K562 (cell line): ENCODE measurements at regions of chr12 and their contacts with region 1.

Region 1: DNA sequence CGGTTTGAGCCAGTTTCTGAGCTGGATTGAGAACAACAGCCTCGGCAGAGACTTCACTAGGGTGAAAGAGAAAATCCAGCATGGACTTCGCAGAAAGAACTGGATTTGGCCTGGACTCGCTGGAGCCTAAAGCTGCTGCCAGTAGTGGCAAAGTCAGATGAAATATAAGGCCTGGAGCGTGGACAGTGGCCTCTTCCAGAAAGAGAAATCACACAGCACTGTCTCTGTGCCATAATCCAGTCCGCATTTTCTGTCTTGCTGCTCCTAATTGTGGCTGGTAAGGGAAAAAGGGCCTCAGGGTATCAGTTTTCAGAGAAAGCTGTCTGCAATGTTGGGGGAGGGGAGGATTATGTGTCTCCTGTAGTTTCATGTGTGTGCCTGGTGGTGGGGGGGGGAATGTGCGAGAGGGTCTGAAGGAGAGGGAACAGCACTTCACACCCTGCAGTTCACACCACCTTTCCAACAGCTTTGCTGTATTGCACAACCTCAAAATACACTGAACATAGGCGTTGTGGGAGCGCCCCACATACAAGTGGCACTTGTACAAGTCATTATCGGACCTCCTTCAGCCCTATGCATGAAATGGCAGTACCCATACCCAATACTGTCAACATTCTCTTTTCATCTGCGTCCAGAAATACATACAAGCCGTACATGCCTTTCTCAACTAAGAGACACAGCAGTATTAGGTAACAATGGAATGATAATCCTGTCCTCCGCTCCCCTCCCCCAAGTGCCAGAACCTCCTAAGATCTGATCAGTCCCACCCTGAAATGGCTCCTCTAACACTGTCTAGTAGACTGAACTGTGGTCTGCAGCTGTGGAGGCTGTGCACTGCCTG is 107.5 kb upstream of the ATF7IP start:
- DNase-seq: peak; percentile 17 to 95 (median 71)
- ATAC-seq: peak; percentile 88
- H3K4me3 ChIP-seq: no peak overlapping the region
- H3K27ac ChIP-seq: peak overlapping the region; percentile 98
- H3K4me1 ChIP-seq: peaks cover 19 to 37% of the 10 kb centered on the region in 2 experiments
- H3K27me3 ChIP-seq: no peaks in the 10 kb centered on the region
- CTCF ChIP-seq: peak in 1 of 3 experiments; percentile 13; a peak in 2 of 6 replicates
- EP300 ChIP-seq: peak; percentile 86
- POLR2A ChIP-seq: peak; percentile 29; the same call in 1 of the 2 replicates
- RAD21 ChIP-seq: peak; percentile 62 to 71

Region 2: GRCh38 chr12:14043811-14044530 is 214.0 kb before region 1 on chr12:
- CTCF ChIA-PET with region 1: no interaction called
- POLR2A ChIA-PET with region 1: no interaction called
- in situ Hi-C with region 1: no loop called
- intact Hi-C with region 1: no loop called
- DNase-seq: no peak
- ATAC-seq: no peak
- H3K4me3 ChIP-seq: no peak overlapping the region
- H3K27ac ChIP-seq: no peak overlapping the region
- H3K4me1 ChIP-seq: no peaks in the 10 kb centered on the region
- H3K27me3 ChIP-seq: no peaks in the 10 kb centered on the region
- CTCF ChIP-seq: no peak
- EP300 ChIP-seq: no peak
- POLR2A ChIP-seq: no peak
- RAD21 ChIP-seq: no peak

Region 3: GRCh38 chr12:14138495-14138894 is 119.5 kb before region 1 on chr12:
- CTCF ChIA-PET with region 1: no interaction called
- POLR2A ChIA-PET with region 1: no interaction called
- in situ Hi-C with region 1: no loop called
- intact Hi-C with region 1: no loop called
- DNase-seq: peak; percentile 1 to 9 (median 7)
- ATAC-seq: peak; percentile 81
- H3K4me3 ChIP-seq: no peak overlapping the region
- H3K27ac ChIP-seq: no peak overlapping the region
- H3K4me1 ChIP-seq: no peaks in the 10 kb centered on the region
- H3K27me3 ChIP-seq: no peaks in the 10 kb centered on the region
- CTCF ChIP-seq: 0 out of 6 replicates have a peak, but pooled peaks have one; percentile 15 to 21 (median 19)
- EP300 ChIP-seq: no peak
- POLR2A ChIP-seq: no peak
- RAD21 ChIP-seq: no peak

Region 4: GRCh38 chr12:14273908-14274298 is 15.9 kb after region 1 on chr12:
- CTCF ChIA-PET with region 1: no interaction called
- POLR2A ChIA-PET with region 1: no interaction called
- in situ Hi-C with region 1: no loop called
- intact Hi-C with region 1: no loop called
- DNase-seq: no peak
- ATAC-seq: no peak; the same call in 1 of the 3 replicates
- H3K4me3 ChIP-seq: no peak overlapping the region
- H3K27ac ChIP-seq: no peak overlapping the region; the same call in 2 of the 3 replicates
- H3K4me1 ChIP-seq: peaks cover 0 to 3% of the 10 kb centered on the region in 2 experiments; a peak in 2 of 5 replicates
- H3K27me3 ChIP-seq: no peaks in the 10 kb centered on the region
- CTCF ChIP-seq: no peak
- EP300 ChIP-seq: no peak
- POLR2A ChIP-seq: no peak
- RAD21 ChIP-seq: no peak

Region 5: GRCh38 chr12:14284184-14284722 is 26.3 kb after region 1 on chr12:
- CTCF ChIA-PET with region 1: no interaction called
- POLR2A ChIA-PET with region 1: interaction called, 7 read pairs
- in situ Hi-C with region 1: no loop called
- intact Hi-C with region 1: loop called (anchors 1 kb)
- DNase-seq: peak; percentile 21 to 81 (median 48)
- ATAC-seq: peak; percentile 99
- H3K4me3 ChIP-seq: no peak overlapping the region
- H3K27ac ChIP-seq: peak overlapping the region; percentile 82
- H3K4me1 ChIP-seq: peaks cover 8 to 18% of the 10 kb centered on the region in 2 experiments; a peak in 4 of 5 replicates
- H3K27me3 ChIP-seq: no peaks in the 10 kb centered on the region
- CTCF ChIP-seq: peak; percentile 20 to 40 (median 38); a peak in 4 of 6 replicates
- EP300 ChIP-seq: peak; percentile 25; the same call in 1 of the 2 replicates
- POLR2A ChIP-seq: 0 out of 2 replicates have a peak, but pooled peaks have one; percentile 28
- RAD21 ChIP-seq: peak; percentile 35 to 48

Region 6: GRCh38 chr12:14314801-14315200 is 56.8 kb after region 1 on chr12:
- CTCF ChIA-PET with region 1: no interaction called
- POLR2A ChIA-PET with region 1: no interaction called
- in situ Hi-C with region 1: no loop called
- intact Hi-C with region 1: loop called (anchors 5 kb)
- DNase-seq: no peak
- ATAC-seq: no peak
- H3K4me3 ChIP-seq: no peak overlapping the region
- H3K27ac ChIP-seq: no peak overlapping the region
- H3K4me1 ChIP-seq: peaks cover 0 to 2% of the 10 kb centered on the region in 2 experiments; a peak in 1 of 5 replicates
- H3K27me3 ChIP-seq: no peaks in the 10 kb centered on the region
- CTCF ChIP-seq: no peak
- EP300 ChIP-seq: no peak
- POLR2A ChIP-seq: no peak
- RAD21 ChIP-seq: no peak

Region 7: GRCh38 chr12:14365294-14366208 is 107.6 kb after region 1 on chr12 and contains the start of gene ATF7IP:
- CTCF ChIA-PET with region 1: no interaction called
- POLR2A ChIA-PET with region 1: interaction called, 10 read pairs
- in situ Hi-C with region 1: loop called (anchors 10 kb)
- intact Hi-C with region 1: loop called (anchors 1 kb)
- DNase-seq: peak; percentile 75 to 90 (median 82)
- ATAC-seq: peak; percentile 93
- H3K4me3 ChIP-seq: peak within 1 kb of the TSS; percentile 41
- H3K27ac ChIP-seq: peak within 1 kb of the TSS; percentile 93
- H3K4me1 ChIP-seq: no peaks in the 10 kb centered on the region; a peak in 1 of 5 replicates
- H3K27me3 ChIP-seq: no peaks in the 10 kb centered on the region
- CTCF ChIP-seq: peak in 1 of 3 experiments; percentile 40; a peak in 2 of 6 replicates
- EP300 ChIP-seq: no peak
- POLR2A ChIP-seq: peak; percentile 60
- RAD21 ChIP-seq: peak; percentile 28 to 47; a peak in 3 of 4 replicates
- polyA plus RNA-seq, gene ATF7IP: 2.8 to 3.5 TPM

Region 8: DNA sequence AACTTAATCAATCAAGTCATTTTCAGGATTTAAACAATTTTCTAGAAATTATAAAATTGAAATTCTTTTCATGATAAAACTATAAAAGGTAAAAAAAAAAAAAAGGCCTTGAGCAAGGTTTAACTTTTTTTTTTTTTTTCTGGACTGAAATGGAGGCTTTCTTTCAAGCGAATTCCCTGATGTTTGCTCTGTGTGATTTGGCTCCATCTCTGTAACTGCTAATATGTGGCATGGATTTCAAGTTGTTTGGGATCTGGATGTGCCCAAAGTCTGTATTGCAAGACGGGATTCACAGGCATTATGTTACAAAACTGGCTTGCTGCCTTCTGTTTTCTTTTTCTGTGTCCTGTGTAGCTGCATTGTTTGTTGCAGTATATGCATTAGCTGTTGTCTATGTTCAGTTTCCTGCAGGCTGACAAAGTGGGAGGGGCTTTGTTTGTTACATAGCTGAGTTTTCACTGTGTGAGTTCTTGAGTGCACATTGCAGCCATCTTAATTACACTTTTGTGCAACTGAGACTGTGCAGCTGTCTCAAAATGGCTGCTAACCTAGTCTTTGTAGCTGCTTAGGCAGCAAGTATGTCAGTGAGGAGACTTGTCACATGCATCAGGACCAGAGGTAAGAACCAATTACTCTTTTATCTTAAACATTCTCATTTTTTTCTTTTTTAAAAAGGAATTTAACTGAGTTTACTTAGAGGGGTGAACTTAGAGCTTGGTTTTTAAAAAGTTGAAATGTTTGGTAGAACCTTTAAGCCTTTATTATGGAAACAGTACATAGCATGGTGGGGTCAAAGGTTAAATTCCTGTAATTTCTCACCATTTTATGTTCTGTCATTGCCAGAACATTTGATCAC is 127.1 kb after region 1 on chr12:
- CTCF ChIA-PET with region 1: no interaction called
- POLR2A ChIA-PET with region 1: interaction called, 14 read pairs
- in situ Hi-C with region 1: no loop called
- intact Hi-C with region 1: loop called (anchors 1 kb)
- DNase-seq: peak; percentile 33 to 86 (median 52)
- ATAC-seq: peak; percentile 93
- H3K4me3 ChIP-seq: peak overlapping the region; percentile 31
- H3K27ac ChIP-seq: peak overlapping the region; percentile 72
- H3K4me1 ChIP-seq: no peaks in the 10 kb centered on the region; a peak in 1 of 5 replicates
- H3K27me3 ChIP-seq: no peaks in the 10 kb centered on the region
- CTCF ChIP-seq: no peak
- EP300 ChIP-seq: 0 out of 2 replicates have a peak, but pooled peaks have one; percentile 27
- POLR2A ChIP-seq: peak; percentile 65
- RAD21 ChIP-seq: no peak

Region 9: DNA sequence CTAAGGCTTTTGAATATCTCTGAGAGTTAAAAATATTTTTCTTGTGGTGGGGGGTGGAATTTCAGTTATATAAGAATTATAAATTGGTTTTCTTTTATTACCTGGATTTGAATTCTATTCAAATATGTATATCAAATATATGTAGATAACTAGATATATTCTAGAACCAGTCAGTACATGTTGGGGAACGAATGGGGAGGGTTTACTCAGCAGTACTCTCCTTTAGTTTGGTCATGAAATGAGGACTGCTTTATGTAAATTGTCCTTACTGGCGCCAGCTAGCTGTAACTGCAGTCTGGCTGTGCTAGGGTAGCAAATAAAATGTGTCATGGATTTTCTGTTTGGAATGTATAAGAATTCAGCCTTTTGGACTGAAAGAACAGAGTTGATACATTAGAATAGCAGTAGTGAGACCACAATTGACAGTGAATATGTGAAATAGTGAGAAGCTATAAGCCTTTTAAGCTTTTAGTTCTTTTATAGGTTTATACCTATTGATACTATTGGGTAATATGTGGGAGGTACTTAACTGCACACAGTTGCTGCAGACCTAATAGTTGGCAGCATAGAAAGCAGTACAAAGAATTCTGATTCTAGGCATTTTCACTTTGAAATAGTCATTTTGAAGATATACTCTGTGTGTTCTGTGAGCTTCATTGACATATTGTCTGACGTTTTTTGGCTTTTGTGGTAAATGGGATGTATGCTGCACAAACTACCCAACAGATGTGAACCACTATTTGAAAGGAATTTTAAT is 136.5 kb after region 1 on chr12:
- CTCF ChIA-PET with region 1: interaction called, 3 read pairs
- POLR2A ChIA-PET with region 1: interaction called, 16 read pairs
- in situ Hi-C with region 1: no loop called
- intact Hi-C with region 1: loop called (anchors 1 kb)
- DNase-seq: peak; percentile 46 to 81 (median 58)
- ATAC-seq: peak; percentile 96
- H3K4me3 ChIP-seq: no peak overlapping the region
- H3K27ac ChIP-seq: peak overlapping the region; percentile 82
- H3K4me1 ChIP-seq: peaks cover 0 to 5% of the 10 kb centered on the region in 2 experiments; a peak in 2 of 5 replicates
- H3K27me3 ChIP-seq: no peaks in the 10 kb centered on the region
- CTCF ChIP-seq: peak in 1 of 3 experiments; percentile 31; a peak in 3 of 6 replicates
- EP300 ChIP-seq: peak; percentile 61; the same call in 1 of the 2 replicates
- POLR2A ChIP-seq: no peak; the same call in 1 of the 2 replicates
- RAD21 ChIP-seq: no peak

Region 10: GRCh38 chr12:14454098-14454907 is 196.3 kb after region 1 on chr12:
- CTCF ChIA-PET with region 1: no interaction called
- POLR2A ChIA-PET with region 1: interaction called, 3 read pairs
- in situ Hi-C with region 1: no loop called
- intact Hi-C with region 1: loop called (anchors 1 kb)
- DNase-seq: peak; percentile 12 to 50 (median 28)
- ATAC-seq: peak; percentile 91
- H3K4me3 ChIP-seq: no peak overlapping the region
- H3K27ac ChIP-seq: no peak overlapping the region
- H3K4me1 ChIP-seq: no peaks in the 10 kb centered on the region
- H3K27me3 ChIP-seq: no peaks in the 10 kb centered on the region
- CTCF ChIP-seq: peak; percentile 63 to 98 (median 90)
- EP300 ChIP-seq: no peak
- POLR2A ChIP-seq: no peak
- RAD21 ChIP-seq: peak; percentile 31 to 86